ENCODE measurements at regions of chr2 and their contacts with region 1.

Region 1: DNA sequence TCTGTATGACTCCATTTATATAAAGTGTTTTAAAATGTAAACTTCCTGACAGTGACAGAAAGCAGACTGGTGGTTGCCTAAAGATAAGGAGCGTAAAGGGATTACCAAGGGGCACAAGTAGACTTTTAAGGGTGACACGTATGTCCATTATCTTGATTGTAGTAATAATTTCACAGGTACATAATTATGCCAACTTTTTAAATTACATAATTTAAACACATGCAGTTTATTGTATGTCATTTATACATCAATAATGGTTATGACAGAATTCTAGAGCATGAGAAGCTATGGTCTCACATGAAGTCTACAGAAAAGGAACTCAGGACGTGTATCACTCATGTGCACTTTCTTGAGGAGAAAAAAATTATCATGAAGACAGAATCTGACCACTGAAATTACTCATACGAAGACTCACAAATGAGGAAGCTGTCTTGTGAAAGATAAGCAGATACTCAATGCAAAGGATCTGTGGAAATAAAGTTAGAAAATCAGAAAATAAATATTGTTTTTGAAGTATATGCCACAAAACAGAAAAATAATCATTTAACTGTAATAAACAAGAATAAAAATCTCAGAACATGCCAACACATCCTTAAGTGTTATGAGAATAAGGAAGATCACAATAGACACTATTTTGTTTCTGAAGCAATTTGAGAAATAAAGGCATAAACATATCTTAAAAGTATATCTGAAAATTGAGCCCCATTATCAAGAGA is 84.4 kb downstream of the TMEM131 start:
- DNase-seq: no peak
- ATAC-seq: peak; percentile 72
- H3K4me3 Mint-ChIP-seq: peak overlapping the region; percentile 67
- H3K27ac Mint-ChIP-seq: peak overlapping the region; percentile 82
- H3K4me1 Mint-ChIP-seq: peaks cover 98% of the 10 kb centered on the region
- H3K27me3 Mint-ChIP-seq: no peaks in the 10 kb centered on the region
- CTCF ChIP-seq: no peak

Region 2: DNA sequence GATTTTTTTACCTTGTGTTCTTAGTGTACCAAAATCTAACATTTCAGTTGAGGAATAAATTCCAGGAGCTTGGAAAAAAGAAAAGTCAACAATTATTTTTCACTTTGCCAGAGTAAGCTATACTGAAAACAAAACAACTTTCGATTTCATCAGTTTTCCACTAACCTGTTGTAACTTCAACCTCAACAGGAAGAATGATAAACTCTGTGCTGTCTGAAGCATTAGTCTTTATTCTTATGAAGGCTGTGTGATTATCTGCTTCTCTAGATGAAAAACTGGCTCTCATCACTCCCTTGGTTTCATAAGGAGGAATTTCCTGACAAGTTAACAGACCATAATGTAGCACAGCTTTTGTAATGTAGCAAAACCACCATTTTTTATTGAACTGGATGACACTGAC is 76.8 kb before region 1 on chr2:
- CTCF ChIA-PET with region 1: no interaction called
- POLR2A ChIA-PET with region 1: interaction called, 3 read pairs
- intact Hi-C with region 1: loop called (anchors 5 kb)
- DNase-seq: no peak
- ATAC-seq: no peak
- H3K4me3 Mint-ChIP-seq: no peak overlapping the region
- H3K27ac Mint-ChIP-seq: no peak overlapping the region
- H3K4me1 Mint-ChIP-seq: peaks cover 5% of the 10 kb centered on the region
- H3K27me3 Mint-ChIP-seq: no peaks in the 10 kb centered on the region
- CTCF ChIP-seq: no peak

Region 3: GRCh38 chr2:97935719-97936161 is 24.4 kb after region 1 on chr2:
- CTCF ChIA-PET with region 1: no interaction called
- POLR2A ChIA-PET with region 1: interaction called, 8 read pairs
- intact Hi-C with region 1: loop called (anchors 1 kb)
- DNase-seq: no peak
- ATAC-seq: no peak
- H3K4me3 Mint-ChIP-seq: peak overlapping the region; percentile 56
- H3K27ac Mint-ChIP-seq: peak overlapping the region; percentile 65
- H3K4me1 Mint-ChIP-seq: peaks cover 96% of the 10 kb centered on the region
- H3K27me3 Mint-ChIP-seq: no peaks in the 10 kb centered on the region
- CTCF ChIP-seq: no peak

Region 4: GRCh38 chr2:98012561-98012991 is 101.2 kb after region 1 on chr2:
- CTCF ChIA-PET with region 1: no interaction called
- POLR2A ChIA-PET with region 1: interaction called, 10 read pairs
- intact Hi-C with region 1: loop called (anchors 1 kb)
- DNase-seq: peak; percentile 61
- ATAC-seq: peak; percentile 81
- H3K4me3 Mint-ChIP-seq: peak overlapping the region; percentile 79
- H3K27ac Mint-ChIP-seq: peak overlapping the region; percentile 96
- H3K4me1 Mint-ChIP-seq: peaks cover 75% of the 10 kb centered on the region
- H3K27me3 Mint-ChIP-seq: no peaks in the 10 kb centered on the region
- CTCF ChIP-seq: no peak

Region 5: DNA sequence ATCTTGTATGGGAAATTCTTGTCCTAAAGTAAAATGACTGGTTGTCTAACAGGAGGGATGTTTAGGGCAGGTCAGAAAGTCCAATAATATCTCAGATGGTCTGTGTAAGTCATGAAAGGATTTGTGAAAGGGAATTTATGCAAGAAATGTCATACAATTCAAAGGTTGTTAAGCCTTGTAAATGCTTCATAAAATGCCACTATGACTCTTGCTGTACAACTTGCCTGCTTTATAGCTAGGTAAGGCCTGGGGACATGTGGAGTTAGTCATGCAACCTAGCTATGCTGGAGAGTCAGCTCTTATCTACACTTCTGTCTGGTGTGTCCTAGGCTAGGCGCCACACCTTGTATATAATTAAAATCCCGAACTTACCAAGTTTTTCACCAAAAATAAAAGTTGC is 138.7 kb after region 1 on chr2:
- CTCF ChIA-PET with region 1: no interaction called
- POLR2A ChIA-PET with region 1: interaction called, 13 read pairs
- intact Hi-C with region 1: no loop called
- DNase-seq: no peak
- ATAC-seq: no peak
- H3K4me3 Mint-ChIP-seq: no peak overlapping the region
- H3K27ac Mint-ChIP-seq: no peak overlapping the region
- H3K4me1 Mint-ChIP-seq: no peaks in the 10 kb centered on the region
- H3K27me3 Mint-ChIP-seq: no peaks in the 10 kb centered on the region
- CTCF ChIP-seq: no peak